Mammary epithelial cell (primary cell): ENCODE measurements at regions of chr2 and their contacts with region 1.

Region 1: GRCh38 chr2:135473567-135473966 is 57.5 kb downstream of the ZRANB3 start:
- DNase-seq: peak; percentile 3
- H3K4me3 ChIP-seq: no peak overlapping the region
- H3K27ac ChIP-seq: no peak overlapping the region
- H3K4me1 ChIP-seq: no peaks in the 10 kb centered on the region
- H3K27me3 ChIP-seq: no peaks in the 10 kb centered on the region
- CTCF ChIP-seq: peak; percentile 26 to 51

Region 2: GRCh38 chr2:135709992-135710391 is 236.4 kb after region 1 on chr2:
- CTCF ChIA-PET with region 1: no interaction called
- dilution Hi-C with region 1: no loop called
- in situ Hi-C with region 1: no loop called
- intact Hi-C with region 1: loop called (anchors 1 kb)
- DNase-seq: peak; percentile 16
- H3K4me3 ChIP-seq: no peak overlapping the region
- H3K27ac ChIP-seq: no peak overlapping the region
- H3K4me1 ChIP-seq: no peaks in the 10 kb centered on the region
- H3K27me3 ChIP-seq: no peaks in the 10 kb centered on the region
- CTCF ChIP-seq: peak; percentile 90 to 94